MCF 10A (cell line): ENCODE measurements at regions of chr11 and their contacts with region 1.

Region 1: GRCh38 chr11:78188286-78189173 is at the starts of genes KCTD21 and USP35:
- DNase-seq: peak; percentile 97
- H3K4me3 Mint-ChIP-seq: peak within 1 kb of the TSS; percentile 100
- H3K27ac Mint-ChIP-seq: peak within 1 kb of the TSS; percentile 99
- H3K4me1 Mint-ChIP-seq: peaks cover 41% of the 10 kb centered on the region
- H3K27me3 Mint-ChIP-seq: no peaks in the 10 kb centered on the region
- CTCF ChIP-seq: no peak
- total RNA-seq, gene KCTD21: 10.2 and 11.3 TPM in 2 replicates
- total RNA-seq, gene USP35: 6.7 and 10.3 TPM in 2 replicates

Region 2: GRCh38 chr11:77820563-77821348 is 367.8 kb before region 1 on chr11 and contains the starts of genes AAMDC and RSF1:
- CTCF ChIA-PET with region 1: interaction called, 5 read pairs
- POLR2A ChIA-PET with region 1: interaction called, 4 read pairs
- intact Hi-C with region 1: loop called (anchors 5 kb)
- DNase-seq: peak; percentile 99
- H3K4me3 Mint-ChIP-seq: peak within 1 kb of the TSS; percentile 93
- H3K27ac Mint-ChIP-seq: peak within 1 kb of the TSS; percentile 90
- H3K4me1 Mint-ChIP-seq: peaks cover 7% of the 10 kb centered on the region
- H3K27me3 Mint-ChIP-seq: no peaks in the 10 kb centered on the region
- CTCF ChIP-seq: peak; percentile 72
- total RNA-seq, gene AAMDC: 13.0 and 13.2 TPM in 2 replicates
- total RNA-seq, gene RSF1: 62.0 and 71.2 TPM in 2 replicates

Region 3: GRCh38 chr11:78079232-78080083 is 109.1 kb before region 1 on chr11 and contains the start of gene NDUFC2:
- CTCF ChIA-PET with region 1: no interaction called
- POLR2A ChIA-PET with region 1: interaction called, 25 read pairs
- intact Hi-C with region 1: no loop called
- DNase-seq: peak; percentile 72
- H3K4me3 Mint-ChIP-seq: peak within 1 kb of the TSS; percentile 83
- H3K27ac Mint-ChIP-seq: peak within 1 kb of the TSS; percentile 65
- H3K4me1 Mint-ChIP-seq: peaks cover 37% of the 10 kb centered on the region
- H3K27me3 Mint-ChIP-seq: no peaks in the 10 kb centered on the region
- CTCF ChIP-seq: no peak
- total RNA-seq, gene NDUFC2: 156 and 186 TPM in 2 replicates

Region 4: GRCh38 chr11:78139422-78140391 is 48.8 kb before region 1 on chr11 and contains the start of gene ALG8:
- CTCF ChIA-PET with region 1: interaction called, 3 read pairs
- POLR2A ChIA-PET with region 1: interaction called, 50 read pairs
- intact Hi-C with region 1: loop called (anchors 1 kb)
- DNase-seq: peak; percentile 93
- H3K4me3 Mint-ChIP-seq: peak within 1 kb of the TSS; percentile 93
- H3K27ac Mint-ChIP-seq: peak within 1 kb of the TSS; percentile 89
- H3K4me1 Mint-ChIP-seq: peaks cover 17% of the 10 kb centered on the region
- H3K27me3 Mint-ChIP-seq: no peaks in the 10 kb centered on the region
- CTCF ChIP-seq: no peak
- total RNA-seq, gene ALG8: 33.8 and 37.2 TPM in 2 replicates

Region 5: GRCh38 chr11:78177216-78177615 is 11.3 kb before region 1 on chr11:
- CTCF ChIA-PET with region 1: no interaction called
- POLR2A ChIA-PET with region 1: no interaction called
- intact Hi-C with region 1: no loop called
- DNase-seq: no peak
- H3K4me3 Mint-ChIP-seq: no peak overlapping the region
- H3K27ac Mint-ChIP-seq: no peak overlapping the region
- H3K4me1 Mint-ChIP-seq: peaks cover 16% of the 10 kb centered on the region
- H3K27me3 Mint-ChIP-seq: no peaks in the 10 kb centered on the region
- CTCF ChIP-seq: no peak

Region 6: GRCh38 chr11:78416305-78417178 is 228.0 kb after region 1 on chr11:
- CTCF ChIA-PET with region 1: interaction called, 3 read pairs
- POLR2A ChIA-PET with region 1: interaction called, 14 read pairs
- intact Hi-C with region 1: loop called (anchors 1 kb)
- DNase-seq: peak; percentile 66
- H3K4me3 Mint-ChIP-seq: peak overlapping the region; percentile 78
- H3K27ac Mint-ChIP-seq: peak overlapping the region; percentile 57
- H3K4me1 Mint-ChIP-seq: peaks cover 19% of the 10 kb centered on the region
- H3K27me3 Mint-ChIP-seq: no peaks in the 10 kb centered on the region
- CTCF ChIP-seq: peak; percentile 47

Region 7: GRCh38 chr11:78574386-78575381 is 386.2 kb after region 1 on chr11 and contains the start of gene NARS2:
- CTCF ChIA-PET with region 1: interaction called, 3 read pairs
- POLR2A ChIA-PET with region 1: interaction called, 14 read pairs
- intact Hi-C with region 1: no loop called
- DNase-seq: peak; percentile 98
- H3K4me3 Mint-ChIP-seq: peak within 1 kb of the TSS; percentile 89
- H3K27ac Mint-ChIP-seq: peak within 1 kb of the TSS; percentile 90
- H3K4me1 Mint-ChIP-seq: peaks cover 5% of the 10 kb centered on the region
- H3K27me3 Mint-ChIP-seq: no peaks in the 10 kb centered on the region
- CTCF ChIP-seq: no peak
- total RNA-seq, gene NARS2: 15.1 and 24.6 TPM in 2 replicates